H1 (cell line): ENCODE measurements at regions of chr7 and their contacts with region 1.

Region 1: DNA sequence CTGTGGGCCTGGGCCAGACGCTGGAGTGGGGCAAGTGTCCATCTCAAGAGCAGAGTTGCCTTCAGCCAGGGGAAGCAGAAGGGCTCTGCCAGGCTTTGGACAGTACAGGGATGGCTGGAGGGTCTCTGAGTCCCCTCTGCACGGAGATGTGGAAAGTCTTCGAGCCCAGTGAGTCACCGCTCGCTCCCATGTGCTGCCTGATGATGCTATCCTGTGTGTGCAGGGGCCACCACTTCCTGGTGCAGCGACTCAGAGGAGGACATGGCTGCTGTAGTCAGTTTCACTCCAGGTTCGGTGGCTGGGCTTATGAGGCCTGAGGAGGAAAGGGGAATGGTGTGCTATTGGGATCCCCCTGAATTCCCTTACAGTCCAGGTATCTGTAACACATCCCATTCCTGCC is 6.0 kb downstream of the ADCYAP1R1 start:
- DNase-seq: no peak
- H3K4me3 ChIP-seq: no peak overlapping the region
- H3K27ac ChIP-seq: no peak overlapping the region
- H3K4me1 ChIP-seq: peaks cover 0 to 12% (median 8%) of the 10 kb centered on the region in 4 experiments; a peak in 5 of 7 replicates
- H3K27me3 ChIP-seq: peaks cover 3 to 12% (median 11%) of the 10 kb centered on the region in 4 experiments; a peak in 6 of 7 replicates
- CTCF ChIP-seq: no peak
- EP300 ChIP-seq: no peak
- POLR2A ChIP-seq: no peak
- RAD21 ChIP-seq: no peak

Region 2: GRCh38 chr7:30938435-30939316 is 119.4 kb before region 1 on chr7:
- CTCF ChIA-PET with region 1: interaction called, 10 read pairs
- POLR2A ChIA-PET with region 1: interaction called, 3 read pairs
- DNase-seq: peak; percentile 91 to 98
- H3K4me3 ChIP-seq: peak overlapping the region in 3 of 4 experiments; percentile 31 to 52 (median 34); a peak in 6 of 8 replicates
- H3K27ac ChIP-seq: peak overlapping the region; percentile 23; the same call in 1 of the 2 replicates
- H3K4me1 ChIP-seq: peaks cover 0 to 5% (median 4%) of the 10 kb centered on the region in 4 experiments; a peak in 6 of 7 replicates
- H3K27me3 ChIP-seq: 0 out of 7 replicates have a peak, but pooled peaks cover 0 to 2% (median 0%) of the 10 kb centered on the region in 4 experiments
- CTCF ChIP-seq: peak; percentile 96 to 100 (median 99)
- EP300 ChIP-seq: no peak
- POLR2A ChIP-seq: peak in 1 of 2 experiments; percentile 62; a peak in 2 of 3 replicates
- RAD21 ChIP-seq: peak; percentile 72 to 76

Region 3: DNA sequence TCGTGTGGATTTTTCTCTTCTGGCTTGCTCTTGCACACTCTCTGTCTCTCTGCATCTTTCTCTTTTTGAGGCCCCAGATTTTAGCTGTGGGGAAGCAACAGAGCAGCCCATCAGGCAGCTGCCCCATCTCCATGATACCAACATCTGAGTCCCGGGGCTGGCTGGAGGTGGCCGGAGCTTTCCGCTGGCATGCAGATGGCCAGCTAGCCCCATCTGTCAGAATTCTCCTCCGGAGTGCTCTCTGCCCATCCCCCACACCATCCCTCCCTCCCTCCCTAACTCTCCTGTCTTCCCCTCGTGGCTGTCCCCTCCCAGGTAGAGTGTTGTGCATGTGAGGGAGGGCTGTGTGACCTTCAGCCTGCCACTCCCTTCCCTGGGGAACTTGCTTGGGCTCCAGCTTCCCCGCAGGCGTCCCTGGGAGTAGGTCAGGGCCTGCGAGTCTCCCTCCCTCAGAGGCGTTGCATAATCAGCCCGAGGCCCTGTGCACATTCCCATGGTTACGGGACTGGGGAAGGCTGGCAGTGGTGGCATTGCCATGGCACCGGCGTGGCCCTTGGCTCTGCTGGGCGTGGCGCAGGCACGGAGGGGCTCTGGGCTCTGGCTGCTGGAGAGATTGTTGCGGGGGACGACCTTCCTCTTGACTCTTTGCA is 69.6 kb before region 1 on chr7:
- CTCF ChIA-PET with region 1: interaction called, 218 read pairs
- POLR2A ChIA-PET with region 1: interaction called, 3 read pairs
- DNase-seq: peak in 1 of 2 experiments; percentile 66
- H3K4me3 ChIP-seq: no peak overlapping the region
- H3K27ac ChIP-seq: no peak overlapping the region
- H3K4me1 ChIP-seq: peaks cover 13 to 49% (median 39%) of the 10 kb centered on the region in 4 experiments
- H3K27me3 ChIP-seq: peaks cover 0 to 7% (median 2%) of the 10 kb centered on the region in 4 experiments; a peak in 3 of 7 replicates
- CTCF ChIP-seq: no peak
- EP300 ChIP-seq: no peak
- POLR2A ChIP-seq: no peak
- RAD21 ChIP-seq: no peak

Region 4: GRCh38 chr7:31100445-31100844 is 42.3 kb after region 1 on chr7:
- CTCF ChIA-PET with region 1: interaction called, 23 read pairs
- POLR2A ChIA-PET with region 1: interaction called, 3 read pairs
- DNase-seq: no peak
- H3K4me3 ChIP-seq: no peak overlapping the region
- H3K27ac ChIP-seq: no peak overlapping the region
- H3K4me1 ChIP-seq: no peaks in the 10 kb centered on the region
- H3K27me3 ChIP-seq: no peaks in the 10 kb centered on the region
- CTCF ChIP-seq: no peak
- EP300 ChIP-seq: no peak
- POLR2A ChIP-seq: no peak
- RAD21 ChIP-seq: no peak

Region 5: GRCh38 chr7:31129067-31129466 is 70.9 kb after region 1 on chr7:
- CTCF ChIA-PET with region 1: interaction called, 215 read pairs
- POLR2A ChIA-PET with region 1: no interaction called
- DNase-seq: peak in 1 of 2 experiments; percentile 48
- H3K4me3 ChIP-seq: no peak overlapping the region
- H3K27ac ChIP-seq: no peak overlapping the region
- H3K4me1 ChIP-seq: no peaks in the 10 kb centered on the region
- H3K27me3 ChIP-seq: no peaks in the 10 kb centered on the region
- CTCF ChIP-seq: peak in 2 of 3 experiments; percentile 42 to 50; a peak in 3 of 4 replicates
- EP300 ChIP-seq: no peak
- POLR2A ChIP-seq: no peak
- RAD21 ChIP-seq: peak; percentile 8 to 36; a peak in 1 of 4 replicates